ENCODE measurements at regions of chr6 and their contacts with region 1.

Region 1: GRCh38 chr6:123802697-123803496 is 768 bp upstream of the NKAIN2 start:
- DNase-seq: peak; percentile 58 to 84 (median 70)
- ATAC-seq: peak; percentile 86 to 98 (median 96)
- H3K4me3 ChIP-seq: peak overlapping the region; percentile 24 to 61 (median 54)
- H3K27ac ChIP-seq: no peak overlapping the region
- H3K4me1 ChIP-seq: peaks cover 0 to 18% (median 6%) of the 10 kb centered on the region in 12 donors
- H3K27me3 ChIP-seq: peaks cover 0 to 66% (median 12%) of the 10 kb centered on the region in 9 donors
- CTCF ChIP-seq: peak; percentile 68 to 90 (median 82)
- POLR2A ChIP-seq: no peak

Region 2: DNA sequence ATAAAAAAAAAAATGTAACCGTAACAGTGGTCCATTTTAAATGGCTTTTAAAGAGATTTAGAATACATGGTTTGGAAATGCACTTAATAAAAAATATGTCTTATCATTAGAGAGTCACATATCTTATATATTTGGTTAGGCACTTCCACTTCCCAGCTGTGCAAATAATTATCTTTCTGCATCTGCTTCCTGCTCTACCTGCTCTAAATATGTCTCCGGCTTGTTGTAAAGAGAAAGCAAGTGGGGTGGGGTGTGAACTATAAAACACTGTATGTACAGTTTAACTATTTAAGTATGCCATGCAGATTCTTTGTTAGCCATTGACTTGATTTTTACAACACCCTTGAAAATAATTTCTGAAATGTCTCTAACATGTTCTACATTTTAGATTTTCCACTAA is 107.1 kb after region 1 on chr6:
- intact Hi-C with region 1: no loop called
- DNase-seq: no peak
- ATAC-seq: no peak
- H3K4me3 ChIP-seq: no peak overlapping the region
- H3K27ac ChIP-seq: no peak overlapping the region
- H3K4me1 ChIP-seq: no peaks in the 10 kb centered on the region
- H3K27me3 ChIP-seq: no peaks in the 10 kb centered on the region
- CTCF ChIP-seq: no peak
- POLR2A ChIP-seq: no peak

Region 3: DNA sequence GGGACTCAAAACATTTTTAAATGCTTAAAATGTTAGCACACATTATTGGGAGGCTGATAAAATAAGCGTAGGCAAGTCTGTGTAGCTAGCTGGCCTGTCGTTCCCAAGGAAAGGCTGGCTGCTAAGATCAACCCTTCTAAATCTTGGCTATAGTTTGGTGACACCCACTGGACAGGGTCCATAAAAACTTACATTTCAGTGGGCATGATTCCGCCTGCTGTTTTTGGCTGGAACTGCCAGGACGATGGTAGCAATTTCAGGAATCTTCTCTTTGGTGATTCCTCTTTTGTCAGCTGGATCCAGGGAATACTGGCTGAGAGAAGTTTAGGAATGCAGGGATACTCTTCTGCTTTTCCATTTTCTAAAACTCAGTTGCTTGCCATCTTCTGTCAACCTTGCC is 163.0 kb after region 1 on chr6:
- intact Hi-C with region 1: loop called in 7 of 10 experiments (anchors 2 to 10 kb)
- DNase-seq: no peak
- ATAC-seq: peak in 2 of 4 donors; percentile 62 to 65
- H3K4me3 ChIP-seq: no peak overlapping the region
- H3K27ac ChIP-seq: no peak overlapping the region
- H3K4me1 ChIP-seq: peaks cover 0 to 4% (median 0%) of the 10 kb centered on the region in 12 donors
- H3K27me3 ChIP-seq: no peaks in the 10 kb centered on the region
- CTCF ChIP-seq: peak in 9 of 12 donors; percentile 9 to 44 (median 28)
- POLR2A ChIP-seq: no peak

Region 4: GRCh38 chr6:124054034-124054433 is 251.1 kb after region 1 on chr6:
- intact Hi-C with region 1: loop called in 3 of 10 experiments (anchors 5 to 10 kb)
- DNase-seq: no peak
- ATAC-seq: no peak
- H3K4me3 ChIP-seq: no peak overlapping the region
- H3K27ac ChIP-seq: no peak overlapping the region
- H3K4me1 ChIP-seq: no peaks in the 10 kb centered on the region
- H3K27me3 ChIP-seq: no peaks in the 10 kb centered on the region
- CTCF ChIP-seq: no peak
- POLR2A ChIP-seq: no peak

Region 5: GRCh38 chr6:124795643-124796463 is 993.0 kb after region 1 on chr6:
- intact Hi-C with region 1: loop called in 8 of 10 experiments (anchors 1 to 10 kb)
- DNase-seq: peak in 4 of 5 donors; percentile 25 to 50 (median 38)
- ATAC-seq: peak; percentile 86 to 92 (median 88)
- H3K4me3 ChIP-seq: no peak overlapping the region
- H3K27ac ChIP-seq: no peak overlapping the region
- H3K4me1 ChIP-seq: no peaks in the 10 kb centered on the region
- H3K27me3 ChIP-seq: no peaks in the 10 kb centered on the region
- CTCF ChIP-seq: peak in 11 of 12 donors; percentile 32 to 61 (median 47)
- POLR2A ChIP-seq: no peak